ENCODE measurements at regions of chr2 and their contacts with region 1.

Region 1: GRCh38 chr2:216519154-216519762 is 20.6 kb downstream of the RPL37A start:
- DNase-seq: peak in 4 of 5 donors; percentile 14 to 36 (median 28)
- H3K4me3 ChIP-seq: no peak overlapping the region
- H3K4me3 Mint-ChIP-seq: no peak overlapping the region
- H3K27ac ChIP-seq: no peak overlapping the region
- H3K27ac Mint-ChIP-seq: no peak overlapping the region
- H3K4me1 ChIP-seq: no peaks in the 10 kb centered on the region
- H3K4me1 Mint-ChIP-seq: peaks cover 0 to 4% (median 0%) of the 10 kb centered on the region in 4 donors
- H3K27me3 ChIP-seq: no peaks in the 10 kb centered on the region
- H3K27me3 Mint-ChIP-seq: no peaks in the 10 kb centered on the region

Region 2: DNA sequence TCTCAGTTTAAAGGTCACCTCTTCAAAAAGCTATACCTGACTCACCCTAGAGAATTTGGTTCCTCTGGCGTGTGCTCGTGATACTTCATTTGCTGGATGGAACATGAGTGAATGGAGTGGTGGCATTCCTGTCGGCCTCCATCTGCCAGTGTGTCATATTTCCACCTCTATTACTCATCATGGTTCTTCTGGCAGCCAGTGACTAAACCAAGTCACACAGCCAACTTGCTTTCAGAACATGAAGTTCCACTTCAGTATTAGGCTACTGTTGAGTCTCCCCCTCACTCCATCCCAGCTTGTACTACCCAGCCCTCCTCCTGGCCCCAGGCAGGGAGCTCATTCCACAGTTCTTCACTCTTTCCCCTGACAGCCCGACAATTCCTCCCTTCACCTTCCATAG is 675.7 kb before region 1 on chr2:
- CTCF ChIA-PET with region 1: no interaction called
- POLR2A ChIA-PET with region 1: no interaction called
- intact Hi-C with region 1: no loop called
- DNase-seq: no peak
- H3K4me3 ChIP-seq: no peak overlapping the region
- H3K4me3 Mint-ChIP-seq: no peak overlapping the region
- H3K27ac ChIP-seq: no peak overlapping the region
- H3K27ac Mint-ChIP-seq: no peak overlapping the region
- H3K4me1 ChIP-seq: no peaks in the 10 kb centered on the region
- H3K4me1 Mint-ChIP-seq: no peaks in the 10 kb centered on the region
- H3K27me3 ChIP-seq: no peaks in the 10 kb centered on the region
- H3K27me3 Mint-ChIP-seq: peaks cover 3% of the 10 kb centered on the region in 2 donors

Region 3: GRCh38 chr2:216507220-216508160 is 11.8 kb before region 1 on chr2:
- CTCF ChIA-PET with region 1: interaction called, 19 read pairs
- POLR2A ChIA-PET with region 1: no interaction called
- intact Hi-C with region 1: no loop called
- DNase-seq: peak in 1 of 5 donors; percentile 39
- H3K4me3 ChIP-seq: no peak overlapping the region
- H3K4me3 Mint-ChIP-seq: no peak overlapping the region
- H3K27ac ChIP-seq: no peak overlapping the region
- H3K27ac Mint-ChIP-seq: peak overlapping the region in 2 of 7 donors; percentile 58 to 81
- H3K4me1 ChIP-seq: peaks cover 10% of the 10 kb centered on the region
- H3K4me1 Mint-ChIP-seq: peaks cover 7 to 21% (median 19%) of the 10 kb centered on the region in 4 donors
- H3K27me3 ChIP-seq: no peaks in the 10 kb centered on the region
- H3K27me3 Mint-ChIP-seq: no peaks in the 10 kb centered on the region

Region 4: DNA sequence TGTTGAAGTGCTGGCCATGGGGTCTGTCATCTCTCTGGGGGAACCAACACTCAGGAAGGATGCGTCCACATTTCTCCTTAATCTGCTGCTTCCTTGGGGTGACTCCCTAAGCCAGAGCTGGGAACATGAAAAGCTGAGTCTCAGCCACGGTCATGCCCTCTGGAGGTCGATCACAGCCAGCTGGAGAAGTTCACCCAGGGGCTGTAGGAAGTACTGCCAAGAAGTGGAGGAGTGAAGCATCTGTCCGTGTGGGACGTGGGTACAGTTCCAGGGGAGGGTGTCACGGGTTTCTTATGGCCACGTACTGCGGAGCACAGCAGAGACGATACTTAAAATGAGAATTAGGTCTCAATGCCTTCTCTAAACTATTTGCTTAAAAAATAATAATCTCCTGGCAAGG is 71.5 kb after region 1 on chr2:
- CTCF ChIA-PET with region 1: no interaction called
- POLR2A ChIA-PET with region 1: no interaction called
- intact Hi-C with region 1: no loop called
- DNase-seq: no peak
- H3K4me3 ChIP-seq: no peak overlapping the region
- H3K4me3 Mint-ChIP-seq: no peak overlapping the region
- H3K27ac ChIP-seq: no peak overlapping the region
- H3K27ac Mint-ChIP-seq: no peak overlapping the region
- H3K4me1 ChIP-seq: no peaks in the 10 kb centered on the region
- H3K4me1 Mint-ChIP-seq: no peaks in the 10 kb centered on the region
- H3K27me3 ChIP-seq: no peaks in the 10 kb centered on the region
- H3K27me3 Mint-ChIP-seq: peaks cover 15 to 16% of the 10 kb centered on the region in 2 donors

Region 5: GRCh38 chr2:216666461-216667233 is 147.4 kb after region 1 on chr2:
- CTCF ChIA-PET with region 1: interaction called, 95 read pairs
- POLR2A ChIA-PET with region 1: no interaction called
- intact Hi-C with region 1: no loop called
- DNase-seq: peak; percentile 47 to 64 (median 54)
- H3K4me3 ChIP-seq: no peak overlapping the region
- H3K4me3 Mint-ChIP-seq: no peak overlapping the region
- H3K27ac ChIP-seq: no peak overlapping the region
- H3K27ac Mint-ChIP-seq: no peak overlapping the region
- H3K4me1 ChIP-seq: no peaks in the 10 kb centered on the region
- H3K4me1 Mint-ChIP-seq: no peaks in the 10 kb centered on the region
- H3K27me3 ChIP-seq: no peaks in the 10 kb centered on the region
- H3K27me3 Mint-ChIP-seq: peaks cover 0 to 17% of the 10 kb centered on the region in 2 donors

Region 6: GRCh38 chr2:217510771-217511291 is 991.6 kb after region 1 on chr2:
- CTCF ChIA-PET with region 1: no interaction called
- POLR2A ChIA-PET with region 1: no interaction called
- intact Hi-C with region 1: loop called (anchors 5 kb)
- DNase-seq: peak in 4 of 5 donors; percentile 4 to 12 (median 6)
- H3K4me3 ChIP-seq: no peak overlapping the region
- H3K4me3 Mint-ChIP-seq: no peak overlapping the region
- H3K27ac ChIP-seq: no peak overlapping the region
- H3K27ac Mint-ChIP-seq: no peak overlapping the region
- H3K4me1 ChIP-seq: no peaks in the 10 kb centered on the region
- H3K4me1 Mint-ChIP-seq: peaks cover 0 to 5% (median 2%) of the 10 kb centered on the region in 4 donors
- H3K27me3 ChIP-seq: peaks cover 5% of the 10 kb centered on the region
- H3K27me3 Mint-ChIP-seq: peaks cover 0 to 4% of the 10 kb centered on the region in 2 donors

Region 7: GRCh38 chr2:217756375-217757107 is 1237.3 kb after region 1 on chr2:
- CTCF ChIA-PET with region 1: no interaction called
- POLR2A ChIA-PET with region 1: no interaction called
- intact Hi-C with region 1: loop called (anchors 5 kb)
- DNase-seq: peak; percentile 43 to 54 (median 48)
- H3K4me3 ChIP-seq: no peak overlapping the region
- H3K4me3 Mint-ChIP-seq: peak overlapping the region; percentile 29 to 72 (median 52)
- H3K27ac ChIP-seq: no peak overlapping the region
- H3K27ac Mint-ChIP-seq: no peak overlapping the region
- H3K4me1 ChIP-seq: peaks cover 19% of the 10 kb centered on the region
- H3K4me1 Mint-ChIP-seq: peaks cover 13 to 29% (median 24%) of the 10 kb centered on the region in 4 donors
- H3K27me3 ChIP-seq: no peaks in the 10 kb centered on the region
- H3K27me3 Mint-ChIP-seq: peaks cover 0 to 6% of the 10 kb centered on the region in 2 donors